ENCODE measurements at regions of chr1 and their contacts with region 1.

Region 1: GRCh38 chr1:203006948-203007871 is at the start of gene TMEM183A:
- DNase-seq: peak; percentile 99
- H3K4me3 ChIP-seq: peak within 1 kb of the TSS; percentile 68 to 97 (median 76)
- H3K27ac ChIP-seq: peak within 1 kb of the TSS; percentile 86 to 96 (median 92)
- H3K4me1 ChIP-seq: peaks cover 10 to 31% (median 28%) of the 10 kb centered on the region in 4 donors
- H3K27me3 ChIP-seq: no peaks in the 10 kb centered on the region
- CTCF ChIP-seq: peak in 1 of 3 experiments; percentile 9
- EP300 ChIP-seq: no peak
- POLR2A ChIP-seq: peak; percentile 86
- total RNA-seq, gene TMEM183A: 69.0 to 93.9 (median 87.6) TPM

Region 2: DNA sequence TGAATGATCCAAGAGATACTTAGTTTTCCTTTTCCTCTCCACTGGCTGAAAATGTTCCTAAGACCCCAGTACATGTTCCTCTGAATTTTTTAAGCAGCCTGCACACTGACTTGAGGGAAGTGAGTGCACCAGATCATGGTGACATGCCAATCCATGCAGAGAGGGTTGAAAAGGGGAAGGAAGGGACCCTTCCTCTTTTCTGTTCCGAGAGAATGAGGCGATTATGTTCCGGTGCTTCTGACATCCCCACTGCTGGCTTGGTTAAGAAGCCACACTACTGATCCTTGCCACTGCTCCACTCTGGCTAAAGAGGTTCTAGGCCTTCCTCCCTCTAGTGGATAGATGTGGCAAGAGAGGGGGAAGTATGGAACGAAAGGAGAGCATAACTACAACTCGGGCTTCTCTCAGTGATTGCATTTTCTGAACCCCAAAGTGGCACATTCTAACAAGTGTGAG is 38.3 kb before region 1 on chr1:
- intact Hi-C with region 1: loop called (anchors 5 kb)
- DNase-seq: no peak
- H3K4me3 ChIP-seq: no peak overlapping the region
- H3K27ac ChIP-seq: peak overlapping the region in 2 of 4 donors; percentile 1 to 96
- H3K4me1 ChIP-seq: peaks cover 18 to 31% (median 22%) of the 10 kb centered on the region in 4 donors
- H3K27me3 ChIP-seq: no peaks in the 10 kb centered on the region
- CTCF ChIP-seq: peak; percentile 29 to 60 (median 50)
- EP300 ChIP-seq: no peak
- POLR2A ChIP-seq: no peak

Region 3: GRCh38 chr1:202982715-202983430 is 24.3 kb before region 1 on chr1:
- intact Hi-C with region 1: no loop called
- DNase-seq: no peak
- H3K4me3 ChIP-seq: no peak overlapping the region
- H3K27ac ChIP-seq: no peak overlapping the region
- H3K4me1 ChIP-seq: no peaks in the 10 kb centered on the region
- H3K27me3 ChIP-seq: peaks cover 0 to 8% (median 0%) of the 10 kb centered on the region in 4 donors
- CTCF ChIP-seq: no peak
- EP300 ChIP-seq: no peak
- POLR2A ChIP-seq: no peak